ENCODE measurements at regions of chr2 and their contacts with region 1.

Region 1: DNA sequence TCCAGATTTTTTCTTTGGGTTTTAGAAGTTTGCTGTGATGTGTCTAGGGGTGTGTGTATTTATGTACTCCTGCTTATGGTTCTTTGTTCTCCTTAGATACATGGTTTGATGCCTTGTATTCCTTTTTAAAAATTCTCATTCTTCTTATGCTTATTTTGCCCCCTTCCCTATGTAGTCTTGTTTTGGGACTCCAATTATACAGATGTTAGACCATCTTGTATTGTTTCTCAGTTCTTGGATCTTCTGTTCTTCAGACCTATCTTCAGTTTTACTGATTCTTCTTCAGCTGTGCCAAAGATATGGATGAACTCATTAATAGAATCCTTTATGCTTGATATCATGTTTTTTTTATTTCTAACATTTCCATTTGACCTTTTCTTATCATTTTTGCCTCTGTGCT is 14.2 kb upstream of the MSL3B start:
- DNase-seq: no peak
- H3K4me3 ChIP-seq: no peak overlapping the region
- H3K27ac ChIP-seq: no peak overlapping the region
- H3K4me1 ChIP-seq: no peaks in the 10 kb centered on the region
- H3K27me3 ChIP-seq: peaks cover 15% of the 10 kb centered on the region; the same call in 1 of the 2 replicates
- CTCF ChIP-seq: no peak

Region 2: GRCh38 chr2:233746475-233747282 is 135.7 kb before region 1 on chr2:
- CTCF ChIA-PET with region 1: no interaction called
- POLR2A ChIA-PET with region 1: no interaction called
- intact Hi-C with region 1: no loop called
- DNase-seq: peak in 1 of 2 experiments; percentile 23
- H3K4me3 ChIP-seq: no peak overlapping the region
- H3K27ac ChIP-seq: no peak overlapping the region
- H3K4me1 ChIP-seq: no peaks in the 10 kb centered on the region
- H3K27me3 ChIP-seq: no peaks in the 10 kb centered on the region
- CTCF ChIP-seq: no peak

Region 3: DNA sequence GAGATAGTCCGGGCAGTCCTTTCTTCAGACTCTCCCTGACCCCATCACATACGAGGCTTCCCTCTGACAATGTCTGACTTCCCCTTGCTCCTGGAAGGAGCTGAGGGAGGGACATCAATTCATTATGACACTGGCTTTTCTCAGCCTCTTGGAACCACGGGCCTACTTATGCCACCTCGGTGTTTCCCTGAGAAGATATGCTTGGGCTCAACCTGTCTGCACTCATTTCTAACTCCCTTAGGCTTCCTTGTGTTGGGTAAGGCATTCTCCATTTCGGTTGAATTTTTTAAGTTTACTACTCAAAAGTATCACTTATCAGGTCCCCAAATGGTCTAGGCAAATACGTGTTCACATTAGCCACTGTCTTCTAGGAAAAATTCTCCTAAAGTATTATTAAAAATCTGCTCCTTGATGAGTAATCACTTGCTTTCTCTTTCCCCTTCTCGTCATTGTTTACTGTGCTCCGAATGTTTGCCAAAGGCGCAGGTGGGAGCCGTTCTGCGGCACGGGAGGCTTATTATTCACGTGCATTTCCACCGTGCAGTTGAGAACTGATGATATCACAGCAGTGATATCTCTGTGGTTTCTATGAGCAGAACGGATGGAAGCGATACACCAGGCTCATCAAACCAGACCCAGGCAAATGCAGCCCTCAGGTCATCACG is 581.4 kb after region 1 on chr2:
- CTCF ChIA-PET with region 1: interaction called, 10 read pairs
- POLR2A ChIA-PET with region 1: no interaction called
- intact Hi-C with region 1: no loop called
- DNase-seq: peak; percentile 83 to 94
- H3K4me3 ChIP-seq: peak overlapping the region; percentile 32; the same call in 1 of the 2 replicates
- H3K27ac ChIP-seq: 0 out of 2 replicates have a peak overlapping the region, but pooled peaks have one; percentile 6
- H3K4me1 ChIP-seq: peaks cover 37% of the 10 kb centered on the region
- H3K27me3 ChIP-seq: no peaks in the 10 kb centered on the region
- CTCF ChIP-seq: no peak